ENCODE measurements at regions of chr1 and their contacts with region 1.

Region 1: GRCh38 chr1:199684686-199685273 is 342.7 kb upstream of the NR5A2 start:
- DNase-seq: no peak
- ATAC-seq: no peak

Region 2: DNA sequence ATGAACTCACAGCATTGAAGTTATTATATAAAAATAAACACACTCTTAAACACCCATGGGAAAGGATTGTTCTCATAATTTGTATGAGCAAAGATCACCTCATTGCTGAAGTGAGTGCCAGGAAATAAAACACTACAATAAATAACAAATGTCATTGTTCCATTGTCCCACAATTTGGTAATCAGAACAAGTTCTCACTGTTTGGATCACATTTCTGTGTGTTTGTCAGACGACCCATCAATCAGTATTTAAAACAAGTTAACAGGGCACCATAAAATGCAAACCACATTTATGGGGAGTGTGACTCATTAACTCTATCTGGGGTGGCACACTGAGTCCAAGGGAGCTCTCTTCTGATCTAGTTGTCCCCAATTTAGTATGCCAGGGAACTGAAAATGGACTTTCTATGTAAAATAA is 921.5 kb before region 1 on chr1:
- intact Hi-C with region 1: loop called (anchors 10 kb)
- DNase-seq: no peak
- ATAC-seq: no peak

Measured in sciatic nerve (tissue), 2 donors.